CD14-positive monocyte (primary cell): ENCODE measurements at regions of chr4 and their contacts with region 1.

Region 1: GRCh38 chr4:170027181-170027829 is 1.1 kb upstream of the MFAP3L start:
- DNase-seq: peak; percentile 81 to 87 (median 84)
- H3K4me3 ChIP-seq: peak overlapping the region; percentile 80 to 95 (median 86)
- H3K4me3 Mint-ChIP-seq: peak overlapping the region; percentile 88 to 93
- H3K27ac ChIP-seq: no peak overlapping the region
- H3K27ac Mint-ChIP-seq: peak overlapping the region in 3 of 7 donors; percentile 46 to 79 (median 51)
- H3K4me1 ChIP-seq: peaks cover 13 to 20% of the 10 kb centered on the region in 2 donors
- H3K4me1 Mint-ChIP-seq: peaks cover 13% of the 10 kb centered on the region
- H3K27me3 ChIP-seq: peaks cover 58 to 71% of the 10 kb centered on the region in 2 donors
- H3K27me3 Mint-ChIP-seq: peaks cover 62 to 74% (median 65%) of the 10 kb centered on the region in 3 donors
- CTCF ChIP-seq: no peak

Region 2: DNA sequence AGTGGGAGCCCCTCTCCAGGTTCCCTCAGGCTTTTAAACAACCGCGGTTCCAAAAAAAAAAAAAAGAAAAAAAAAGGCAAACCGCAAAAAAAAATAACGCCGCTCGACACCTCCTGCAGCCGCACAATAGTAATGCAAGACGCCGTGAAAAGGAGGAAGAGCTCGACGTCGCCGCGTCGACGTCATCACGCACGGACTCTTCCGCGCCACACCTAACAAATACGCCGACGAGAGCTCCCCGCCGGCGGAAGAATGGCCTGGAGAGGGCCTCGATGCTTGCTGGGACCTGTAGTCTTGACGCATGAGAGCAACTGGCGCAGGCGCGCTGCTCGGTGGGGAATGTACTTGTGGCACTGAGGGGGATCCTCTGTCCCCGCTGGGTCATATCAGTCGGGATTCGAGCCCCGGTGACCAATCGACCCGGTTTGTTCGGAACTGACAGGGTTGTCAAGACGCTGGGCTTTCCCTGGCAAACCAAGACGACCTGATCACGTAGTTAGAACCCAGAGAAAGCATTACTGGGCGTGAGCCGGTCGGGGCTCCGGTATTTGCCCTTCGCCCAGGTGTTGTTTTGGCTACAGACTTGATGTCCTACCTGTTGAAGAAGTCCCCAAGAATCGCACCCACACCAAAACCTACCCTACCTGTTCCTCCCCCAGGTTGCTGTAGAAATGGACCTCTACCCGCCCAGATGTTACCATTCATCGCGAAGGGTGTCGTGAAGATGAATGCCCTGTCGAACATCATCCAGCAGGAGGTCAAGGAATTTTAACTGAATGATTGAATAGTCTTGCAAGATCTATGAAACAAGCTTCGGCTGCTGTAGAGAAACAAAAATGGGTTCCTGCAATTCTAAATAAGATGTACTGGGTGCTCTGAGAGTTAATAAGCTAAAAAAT is 1016.9 kb before region 1 on chr4 and contains the start of gene CBR4:
- intact Hi-C with region 1: loop called in 1 of 2 experiments (anchors 10 kb)
- DNase-seq: peak; percentile 98 to 99 (median 98)
- H3K4me3 ChIP-seq: peak within 1 kb of the TSS; percentile 66 to 82 (median 75)
- H3K4me3 Mint-ChIP-seq: peak within 1 kb of the TSS; percentile 92
- H3K27ac ChIP-seq: peak within 1 kb of the TSS; percentile 93 to 97
- H3K27ac Mint-ChIP-seq: peak within 1 kb of the TSS; percentile 93 to 99 (median 98)
- H3K4me1 ChIP-seq: peaks cover 16 to 19% of the 10 kb centered on the region in 2 donors
- H3K4me1 Mint-ChIP-seq: peaks cover 33% of the 10 kb centered on the region
- H3K27me3 ChIP-seq: no peaks in the 10 kb centered on the region
- H3K27me3 Mint-ChIP-seq: peaks cover 0 to 4% (median 0%) of the 10 kb centered on the region in 3 donors
- CTCF ChIP-seq: peak; percentile 47
- polyA plus RNA-seq, gene CBR4: 2.8 to 4.2 (median 4.1) TPM

Region 3: GRCh38 chr4:169612871-169613859 is 414.1 kb before region 1 on chr4:
- intact Hi-C with region 1: loop called in 1 of 2 experiments (anchors 5 kb)
- DNase-seq: peak; percentile 61 to 78 (median 76)
- H3K4me3 ChIP-seq: peak overlapping the region; percentile 94 to 97 (median 95)
- H3K4me3 Mint-ChIP-seq: peak overlapping the region; percentile 89 to 98
- H3K27ac ChIP-seq: peak overlapping the region; percentile 98 to 99
- H3K27ac Mint-ChIP-seq: peak overlapping the region; percentile 99 to 100 (median 99)
- H3K4me1 ChIP-seq: peaks cover 8 to 15% of the 10 kb centered on the region in 2 donors
- H3K4me1 Mint-ChIP-seq: peaks cover 11% of the 10 kb centered on the region
- H3K27me3 ChIP-seq: no peaks in the 10 kb centered on the region
- H3K27me3 Mint-ChIP-seq: peaks cover 0 to 5% (median 3%) of the 10 kb centered on the region in 3 donors
- CTCF ChIP-seq: peak; percentile 83

Region 4: DNA sequence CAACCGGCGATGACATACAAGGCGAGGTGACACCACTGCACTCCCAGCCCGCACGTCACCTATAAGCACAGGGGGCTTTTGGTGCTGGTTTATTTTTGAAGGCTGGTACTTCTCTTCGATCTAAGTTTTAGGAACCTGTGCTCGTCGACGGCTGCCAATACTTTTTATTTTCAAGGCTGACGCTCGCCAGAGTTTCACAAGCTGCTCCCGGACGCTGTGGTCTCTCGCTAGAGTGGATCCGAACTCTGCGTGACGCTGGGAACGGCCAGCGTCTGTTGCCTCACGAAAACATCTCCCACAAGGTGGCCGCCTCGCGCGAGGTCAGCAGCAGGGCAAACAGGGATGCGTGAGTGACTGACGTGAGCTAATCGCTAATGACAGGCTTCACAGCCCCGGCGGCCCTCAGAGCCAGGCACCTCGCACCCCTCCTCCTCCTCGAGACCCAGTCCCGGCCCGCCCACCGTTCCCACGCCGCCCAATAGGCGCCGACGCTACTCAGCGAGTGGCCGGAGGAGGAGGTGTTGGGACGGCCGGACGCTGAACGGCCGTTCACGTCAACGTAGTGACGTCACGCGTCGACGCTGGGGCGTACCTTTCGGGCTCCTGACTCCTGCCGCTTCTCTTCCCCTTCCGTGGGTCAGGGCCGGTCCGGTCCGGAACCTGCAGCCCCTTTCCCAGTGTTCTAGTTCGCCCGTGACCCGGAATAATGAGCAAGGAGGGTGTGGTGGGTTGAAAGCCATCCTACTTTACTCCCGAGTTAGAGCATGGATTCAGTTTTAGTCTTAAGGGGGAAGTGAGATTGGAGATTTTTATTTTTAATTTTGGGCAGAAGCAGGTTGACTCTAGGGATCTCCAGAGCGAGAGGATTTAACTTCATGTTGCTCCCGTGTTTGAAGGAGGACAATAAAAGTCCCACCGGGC is 407.1 kb before region 1 on chr4 and contains the start of gene CLCN3:
- intact Hi-C with region 1: loop called in 1 of 2 experiments (anchors 10 kb)
- DNase-seq: peak; percentile 99 to 100 (median 100)
- H3K4me3 ChIP-seq: peak within 1 kb of the TSS; percentile 60 to 95 (median 84)
- H3K4me3 Mint-ChIP-seq: peak within 1 kb of the TSS; percentile 92 to 99
- H3K27ac ChIP-seq: peak within 1 kb of the TSS; percentile 99
- H3K27ac Mint-ChIP-seq: peak within 1 kb of the TSS; percentile 100
- H3K4me1 ChIP-seq: peaks cover 28% of the 10 kb centered on the region in 2 donors
- H3K4me1 Mint-ChIP-seq: peaks cover 32% of the 10 kb centered on the region
- H3K27me3 ChIP-seq: no peaks in the 10 kb centered on the region
- H3K27me3 Mint-ChIP-seq: peaks cover 0 to 9% (median 6%) of the 10 kb centered on the region in 3 donors
- CTCF ChIP-seq: peak; percentile 3
- polyA plus RNA-seq, gene CLCN3: 5.3 to 7.8 (median 5.4) TPM

Region 5: GRCh38 chr4:169757575-169758184 is 269.6 kb before region 1 on chr4 and contains the start of gene HPF1:
- intact Hi-C with region 1: loop called in 1 of 2 experiments (anchors 5 kb)
- DNase-seq: peak; percentile 87 to 92 (median 90)
- H3K4me3 ChIP-seq: peak within 1 kb of the TSS; percentile 62 to 90 (median 86)
- H3K4me3 Mint-ChIP-seq: peak within 1 kb of the TSS; percentile 92 to 94
- H3K27ac ChIP-seq: peak within 1 kb of the TSS; percentile 2 to 71
- H3K27ac Mint-ChIP-seq: peak within 1 kb of the TSS; percentile 16 to 81 (median 74)
- H3K4me1 ChIP-seq: peaks cover 14 to 17% of the 10 kb centered on the region in 2 donors
- H3K4me1 Mint-ChIP-seq: peaks cover 24% of the 10 kb centered on the region
- H3K27me3 ChIP-seq: no peaks in the 10 kb centered on the region
- H3K27me3 Mint-ChIP-seq: peaks cover 3 to 4% (median 4%) of the 10 kb centered on the region in 3 donors
- CTCF ChIP-seq: no peak
- polyA plus RNA-seq, gene HPF1: 10.2 to 29.9 (median 25.1) TPM

Region 6: DNA sequence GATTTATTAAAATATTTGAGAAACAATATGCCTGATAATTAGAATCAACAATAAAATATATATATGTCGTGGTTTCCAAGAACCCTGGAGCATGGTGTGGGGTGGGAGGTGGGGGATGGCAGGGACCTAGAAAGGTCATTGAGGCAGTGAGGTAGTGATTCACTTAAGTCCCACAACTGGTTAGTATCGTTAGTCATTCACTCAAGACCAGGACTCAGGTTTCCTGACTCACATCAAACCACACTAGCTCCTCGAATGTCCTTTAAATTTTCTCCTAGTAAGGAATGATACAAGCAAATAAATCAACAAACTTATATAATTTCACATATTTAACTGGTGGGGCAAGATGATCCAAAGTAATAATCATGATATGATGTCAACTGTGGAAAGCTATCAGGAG is 221.3 kb after region 1 on chr4:
- intact Hi-C with region 1: no loop called
- DNase-seq: no peak
- H3K4me3 ChIP-seq: no peak overlapping the region
- H3K4me3 Mint-ChIP-seq: no peak overlapping the region
- H3K27ac ChIP-seq: no peak overlapping the region
- H3K27ac Mint-ChIP-seq: no peak overlapping the region
- H3K4me1 ChIP-seq: no peaks in the 10 kb centered on the region
- H3K4me1 Mint-ChIP-seq: no peaks in the 10 kb centered on the region
- H3K27me3 ChIP-seq: no peaks in the 10 kb centered on the region
- H3K27me3 Mint-ChIP-seq: peaks cover 0 to 2% (median 0%) of the 10 kb centered on the region in 3 donors
- CTCF ChIP-seq: no peak